H1 (cell line): ENCODE measurements at regions of chr3 and their contacts with region 1.

Region 1: DNA sequence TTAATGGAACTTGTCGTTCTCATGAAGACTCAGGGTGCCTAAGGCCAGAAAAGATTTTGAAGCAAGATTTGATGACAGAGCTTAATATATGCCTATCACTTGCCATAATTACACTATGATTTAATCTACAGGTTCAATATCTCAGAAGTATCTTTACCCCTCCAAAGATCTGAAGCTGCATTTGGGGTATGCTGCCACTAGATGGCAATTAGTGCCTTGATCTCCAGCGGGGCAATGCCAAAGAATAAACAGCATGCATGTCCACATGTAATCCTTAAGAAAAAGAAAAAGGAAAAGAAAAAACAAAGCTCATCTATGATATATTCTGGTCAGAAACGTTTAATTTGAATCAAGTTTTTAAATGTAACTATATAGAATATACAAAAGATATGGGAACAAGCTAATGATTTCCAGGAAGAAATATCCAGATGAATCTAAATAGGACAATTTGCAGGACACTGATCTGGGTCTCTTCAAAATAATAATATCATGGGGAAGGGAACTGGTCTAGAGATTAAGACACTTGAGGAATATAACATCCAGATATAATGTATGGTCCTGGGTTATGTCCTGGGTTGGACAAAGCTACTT is 55.0 kb upstream of the SOX14 start:
- DNase-seq: no peak
- H3K4me3 ChIP-seq: no peak overlapping the region
- H3K27ac ChIP-seq: no peak overlapping the region
- H3K4me1 ChIP-seq: no peaks in the 10 kb centered on the region
- H3K27me3 ChIP-seq: no peaks in the 10 kb centered on the region
- CTCF ChIP-seq: peak; percentile 9 to 80 (median 73)
- EP300 ChIP-seq: no peak
- POLR2A ChIP-seq: no peak
- RAD21 ChIP-seq: peak; percentile 90 to 92

Region 2: GRCh38 chr3:137460944-137461343 is 248.2 kb before region 1 on chr3:
- CTCF ChIA-PET with region 1: no interaction called
- POLR2A ChIA-PET with region 1: no interaction called
- DNase-seq: no peak
- H3K4me3 ChIP-seq: peak overlapping the region in 1 of 4 experiments; percentile 20; a peak in 1 of 8 replicates
- H3K27ac ChIP-seq: no peak overlapping the region
- H3K4me1 ChIP-seq: peaks cover 0 to 1% (median 0%) of the 10 kb centered on the region in 4 experiments; a peak in 2 of 7 replicates
- H3K27me3 ChIP-seq: no peaks in the 10 kb centered on the region; a peak in 1 of 7 replicates
- CTCF ChIP-seq: no peak
- EP300 ChIP-seq: no peak
- POLR2A ChIP-seq: no peak
- RAD21 ChIP-seq: no peak

Region 3: DNA sequence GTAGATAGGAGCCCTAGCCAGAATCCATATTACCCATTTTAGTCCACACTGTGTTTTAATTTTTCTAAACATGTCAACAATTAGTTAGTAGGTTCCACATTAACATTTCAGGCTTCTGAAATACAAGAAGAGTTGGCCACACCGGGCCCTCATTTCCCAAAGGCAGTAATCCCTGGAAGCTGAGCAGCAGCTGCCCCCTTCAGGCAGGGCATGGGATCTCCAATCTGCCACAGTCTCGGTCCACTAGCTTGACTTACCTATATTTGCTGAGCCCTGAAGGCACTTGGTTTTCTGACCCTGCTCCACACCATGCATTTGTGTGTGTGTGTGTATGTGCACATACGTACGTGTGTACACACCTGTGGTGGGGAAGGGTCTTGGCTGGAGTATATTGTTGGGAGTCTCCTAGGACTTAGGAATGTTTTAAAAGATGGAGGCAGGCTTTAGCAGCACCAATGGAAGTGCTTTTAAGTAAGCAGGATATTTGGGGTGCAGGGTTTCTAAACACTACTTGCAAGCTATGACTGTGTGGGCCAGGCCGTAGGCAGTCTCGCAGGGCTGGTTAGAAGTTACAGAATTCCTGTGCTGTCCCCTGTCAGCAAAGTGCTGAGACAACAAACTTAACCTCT is 16.2 kb before region 1 on chr3:
- CTCF ChIA-PET with region 1: interaction called, 15 read pairs
- POLR2A ChIA-PET with region 1: no interaction called
- DNase-seq: peak; percentile 57 to 75
- H3K4me3 ChIP-seq: no peak overlapping the region
- H3K27ac ChIP-seq: no peak overlapping the region
- H3K4me1 ChIP-seq: peaks cover 0 to 10% (median 6%) of the 10 kb centered on the region in 4 experiments; a peak in 4 of 7 replicates
- H3K27me3 ChIP-seq: no peaks in the 10 kb centered on the region
- CTCF ChIP-seq: peak; percentile 95 to 98 (median 96)
- EP300 ChIP-seq: no peak
- POLR2A ChIP-seq: no peak
- RAD21 ChIP-seq: peak; percentile 98 to 100

Region 4: GRCh38 chr3:137746808-137747207 is 37.7 kb after region 1 on chr3:
- CTCF ChIA-PET with region 1: interaction called, 11 read pairs
- POLR2A ChIA-PET with region 1: no interaction called
- DNase-seq: no peak
- H3K4me3 ChIP-seq: no peak overlapping the region
- H3K27ac ChIP-seq: no peak overlapping the region
- H3K4me1 ChIP-seq: no peaks in the 10 kb centered on the region; a peak in 1 of 7 replicates
- H3K27me3 ChIP-seq: peaks cover 0 to 3% (median 0%) of the 10 kb centered on the region in 4 experiments; a peak in 1 of 7 replicates
- CTCF ChIP-seq: peak in 1 of 3 experiments; percentile 20; a peak in 1 of 4 replicates
- EP300 ChIP-seq: no peak
- POLR2A ChIP-seq: no peak
- RAD21 ChIP-seq: no peak; a peak in 1 of 4 replicates

Region 5: GRCh38 chr3:137770835-137771399 is 61.8 kb after region 1 on chr3:
- CTCF ChIA-PET with region 1: interaction called, 10 read pairs
- POLR2A ChIA-PET with region 1: no interaction called
- DNase-seq: peak in 1 of 2 experiments; percentile 78
- H3K4me3 ChIP-seq: peak overlapping the region; percentile 9 to 56 (median 18); a peak in 5 of 8 replicates
- H3K27ac ChIP-seq: no peak overlapping the region
- H3K4me1 ChIP-seq: peaks cover 22 to 48% (median 32%) of the 10 kb centered on the region in 4 experiments
- H3K27me3 ChIP-seq: peaks cover 66 to 100% (median 89%) of the 10 kb centered on the region in 4 experiments
- CTCF ChIP-seq: no peak
- EP300 ChIP-seq: no peak
- POLR2A ChIP-seq: no peak
- RAD21 ChIP-seq: no peak

Region 6: GRCh38 chr3:137946345-137946973 is 237.4 kb after region 1 on chr3:
- CTCF ChIA-PET with region 1: interaction called, 44 read pairs
- POLR2A ChIA-PET with region 1: no interaction called
- DNase-seq: peak; percentile 41 to 67
- H3K4me3 ChIP-seq: no peak overlapping the region
- H3K27ac ChIP-seq: no peak overlapping the region
- H3K4me1 ChIP-seq: peaks cover 0 to 10% (median 0%) of the 10 kb centered on the region in 4 experiments; a peak in 1 of 7 replicates
- H3K27me3 ChIP-seq: peaks cover 0 to 5% (median under 1%) of the 10 kb centered on the region in 4 experiments; a peak in 4 of 7 replicates
- CTCF ChIP-seq: peak; percentile 31 to 79 (median 73)
- EP300 ChIP-seq: no peak
- POLR2A ChIP-seq: no peak
- RAD21 ChIP-seq: peak; percentile 97 to 98